T-cell (primary cell): ENCODE measurements at regions of chr19 and their contacts with region 1.

Region 1: GRCh38 chr19:4791170-4792018 is at the start of gene FEM1A:
- DNase-seq: peak; percentile 93 to 100 (median 99)
- ATAC-seq: peak; percentile 92 to 97 (median 94)
- H3K4me3 ChIP-seq: peak within 1 kb of the TSS; percentile 71 to 84
- H3K4me3 Mint-ChIP-seq: peak within 1 kb of the TSS; percentile 77 to 85 (median 77)
- H3K27ac ChIP-seq: peak within 1 kb of the TSS; percentile 70
- H3K27ac Mint-ChIP-seq: peak within 1 kb of the TSS; percentile 76 to 87
- H3K4me1 ChIP-seq: peaks cover 3 to 41% of the 10 kb centered on the region in 2 experiments
- H3K4me1 Mint-ChIP-seq: peaks cover 20 to 40% (median 39%) of the 10 kb centered on the region in 3 donors
- H3K27me3 ChIP-seq: no peaks in the 10 kb centered on the region
- H3K27me3 Mint-ChIP-seq: no peaks in the 10 kb centered on the region
- total RNA-seq, gene FEM1A: 9.7 to 17.7 (median 16.1) TPM

Region 2: DNA sequence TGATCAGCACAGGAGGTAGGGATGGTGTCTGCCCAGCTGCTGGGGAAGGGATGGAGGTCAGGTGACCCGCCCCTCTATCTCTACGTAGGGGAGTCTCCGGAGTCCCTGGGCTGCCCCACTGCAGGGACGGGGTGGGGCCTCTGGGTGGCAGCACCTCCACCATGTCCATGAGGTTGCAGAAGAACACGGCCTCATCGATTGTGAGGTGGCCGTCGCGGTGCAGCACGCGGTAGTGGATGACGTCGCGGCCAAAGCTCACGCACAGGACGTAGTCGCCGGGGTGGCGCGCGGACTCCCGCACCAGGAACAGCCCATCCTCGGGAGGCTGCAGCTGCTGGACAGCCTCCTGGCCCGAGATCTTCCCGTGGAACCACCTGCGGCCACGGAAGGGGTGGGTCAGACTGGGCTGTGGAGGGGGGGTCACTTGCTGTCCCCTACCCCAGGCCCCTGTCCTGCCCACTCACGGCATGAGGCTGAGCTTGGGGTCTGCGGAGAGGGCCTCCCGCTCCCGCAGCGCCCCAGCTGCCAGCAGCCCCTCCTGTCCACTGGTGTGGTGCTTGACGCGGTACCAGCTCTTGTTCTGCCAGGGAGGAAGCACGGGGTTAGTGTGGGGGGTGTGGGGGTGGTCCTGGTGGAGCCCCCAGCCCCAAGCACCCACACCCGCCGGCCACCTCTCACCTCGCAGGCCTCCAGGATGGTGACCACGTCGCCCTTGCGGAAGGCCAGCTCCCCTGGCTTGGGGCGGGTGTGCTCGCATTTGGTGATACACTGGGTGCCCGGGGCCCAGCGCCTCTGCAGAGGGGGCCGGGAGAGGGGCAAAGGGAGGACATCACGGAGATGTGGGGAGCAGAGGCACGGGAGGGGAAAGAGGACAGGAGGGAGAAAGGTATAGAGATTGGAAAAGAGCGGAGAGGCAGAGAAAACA is 1007.5 kb before region 1 on chr19:
- CTCF ChIA-PET with region 1: no interaction called
- POLR2A ChIA-PET with region 1: interaction called in 1 of 2 experiments, 12 read pairs
- DNase-seq: peak in 25 of 35 experiments; percentile 21 to 62 (median 44)
- ATAC-seq: peak in 1 of 4 experiments; percentile 55
- H3K4me3 ChIP-seq: no peak overlapping the region
- H3K4me3 Mint-ChIP-seq: peak overlapping the region; percentile 63 to 80 (median 79)
- H3K27ac ChIP-seq: no peak overlapping the region
- H3K27ac Mint-ChIP-seq: peak overlapping the region in 1 of 2 donors; percentile 28
- H3K4me1 ChIP-seq: peaks cover 6 to 40% of the 10 kb centered on the region in 2 experiments
- H3K4me1 Mint-ChIP-seq: peaks cover 6 to 31% (median 18%) of the 10 kb centered on the region in 3 donors
- H3K27me3 ChIP-seq: peaks cover 0 to 6% of the 10 kb centered on the region in 2 experiments
- H3K27me3 Mint-ChIP-seq: no peaks in the 10 kb centered on the region

Region 3: DNA sequence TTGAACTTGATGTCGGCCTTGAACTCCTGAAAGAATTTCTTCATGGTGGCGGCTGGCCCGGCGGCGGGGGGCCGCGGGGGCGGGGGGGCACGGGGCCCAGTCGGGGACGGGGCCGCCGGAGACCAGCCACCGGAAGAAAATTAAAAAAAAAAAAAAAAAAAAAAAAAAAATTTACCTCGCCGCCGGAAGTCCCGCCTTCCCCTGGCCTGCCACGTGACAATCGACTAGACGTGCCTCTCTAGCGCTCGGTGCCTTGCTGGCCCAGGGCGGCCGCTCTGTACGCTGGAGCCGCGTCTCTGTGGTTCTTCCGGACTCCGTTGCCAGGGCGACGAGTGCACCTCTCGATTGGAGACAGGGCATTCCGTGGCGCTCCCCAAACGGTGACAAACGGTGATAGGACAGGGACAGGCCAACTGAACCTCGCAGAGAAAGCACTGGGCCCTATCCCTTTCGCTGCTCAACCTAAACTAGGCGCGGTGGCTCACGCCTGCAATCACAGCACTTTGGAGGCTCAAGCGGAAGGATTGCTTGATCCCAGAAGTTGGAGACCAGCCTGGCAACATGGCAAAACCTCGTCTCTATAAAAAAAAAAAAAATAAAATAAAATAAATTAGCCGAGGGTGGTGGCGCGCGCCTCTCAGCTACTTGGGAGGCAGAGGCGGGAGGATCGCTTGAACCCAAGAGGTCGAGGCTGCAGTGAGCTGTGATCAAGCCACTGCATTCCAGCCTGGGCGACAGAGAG is 333.6 kb before region 1 on chr19 and contains the start of gene UBXN6:
- CTCF ChIA-PET with region 1: no interaction called
- POLR2A ChIA-PET with region 1: no interaction called
- DNase-seq: peak; percentile 94 to 99 (median 98)
- ATAC-seq: peak; percentile 93 to 95 (median 94)
- H3K4me3 ChIP-seq: peak within 1 kb of the TSS; percentile 71 to 80
- H3K4me3 Mint-ChIP-seq: peak within 1 kb of the TSS; percentile 86 to 89 (median 87)
- H3K27ac ChIP-seq: peak within 1 kb of the TSS; percentile 60
- H3K27ac Mint-ChIP-seq: peak within 1 kb of the TSS; percentile 86 to 87
- H3K4me1 ChIP-seq: peaks cover 2 to 25% of the 10 kb centered on the region in 2 experiments
- H3K4me1 Mint-ChIP-seq: peaks cover 14 to 26% (median 19%) of the 10 kb centered on the region in 3 donors
- H3K27me3 ChIP-seq: no peaks in the 10 kb centered on the region
- H3K27me3 Mint-ChIP-seq: no peaks in the 10 kb centered on the region
- total RNA-seq, gene UBXN6: 49.7 to 86.4 (median 76.5) TPM

Region 4: GRCh38 chr19:4471403-4472173 is 319.8 kb before region 1 on chr19:
- CTCF ChIA-PET with region 1: interaction called in 1 of 2 experiments, 13 read pairs
- POLR2A ChIA-PET with region 1: no interaction called
- DNase-seq: peak; percentile 86 to 100 (median 98)
- ATAC-seq: peak; percentile 84 to 86 (median 84)
- H3K4me3 ChIP-seq: peak overlapping the region; percentile 76 to 84
- H3K4me3 Mint-ChIP-seq: no peak overlapping the region
- H3K27ac ChIP-seq: peak overlapping the region; percentile 83
- H3K27ac Mint-ChIP-seq: no peak overlapping the region
- H3K4me1 ChIP-seq: peaks cover 15 to 38% of the 10 kb centered on the region in 2 experiments
- H3K4me1 Mint-ChIP-seq: peaks cover 23 to 25% (median 24%) of the 10 kb centered on the region in 3 donors
- H3K27me3 ChIP-seq: no peaks in the 10 kb centered on the region
- H3K27me3 Mint-ChIP-seq: no peaks in the 10 kb centered on the region

Region 5: DNA sequence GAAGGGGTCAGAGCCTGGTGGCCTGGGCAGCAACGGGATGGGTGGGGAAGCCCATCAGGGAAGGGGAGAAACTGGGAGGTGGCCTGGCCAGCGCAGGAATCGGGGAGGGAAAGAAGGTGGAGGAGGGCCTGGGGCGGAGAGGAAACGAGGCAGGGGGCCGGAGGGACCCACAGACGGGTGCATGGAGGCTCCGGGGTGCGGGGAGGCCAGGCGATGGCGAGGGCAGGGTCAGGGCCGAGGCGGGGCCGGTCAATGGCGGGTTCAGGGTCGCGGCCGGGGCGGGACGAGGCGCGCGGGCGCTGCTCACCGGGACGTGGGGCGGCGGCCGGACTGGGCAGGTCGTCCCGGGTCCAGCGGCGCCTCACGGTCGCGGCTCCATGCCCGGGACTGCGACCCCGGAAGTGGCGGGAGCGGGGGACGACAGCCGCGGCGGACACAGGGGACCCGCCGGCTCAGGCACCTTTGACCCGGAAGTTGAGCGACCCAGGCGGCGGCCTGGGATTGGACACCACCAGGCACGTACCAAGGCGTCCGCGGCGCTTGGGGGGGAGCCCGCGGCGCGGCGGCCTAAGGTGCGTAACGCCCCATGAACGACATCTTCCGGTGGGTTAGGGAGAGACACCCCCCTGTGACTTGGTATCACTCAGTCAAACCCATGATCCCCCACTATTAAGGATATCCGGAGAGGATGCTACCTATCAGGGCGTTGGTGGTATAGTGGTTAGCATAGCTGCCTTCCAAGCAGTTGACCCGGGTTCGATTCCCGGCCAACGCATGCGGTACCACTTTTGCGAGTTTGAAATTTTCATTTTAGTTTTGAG is 67.8 kb before region 1 on chr19 and contains the start of gene DPP9:
- CTCF ChIA-PET with region 1: interaction called in 1 of 2 experiments, 36 read pairs
- POLR2A ChIA-PET with region 1: interaction called in 1 of 2 experiments, 6 read pairs
- DNase-seq: peak; percentile 91 to 99 (median 96)
- ATAC-seq: peak; percentile 92 to 96 (median 94)
- H3K4me3 ChIP-seq: peak within 1 kb of the TSS; percentile 88 to 93
- H3K4me3 Mint-ChIP-seq: peak within 1 kb of the TSS; percentile 91 to 99 (median 92)
- H3K27ac ChIP-seq: peak within 1 kb of the TSS; percentile 81
- H3K27ac Mint-ChIP-seq: peak within 1 kb of the TSS; percentile 94 to 96
- H3K4me1 ChIP-seq: peaks cover 8 to 49% of the 10 kb centered on the region in 2 experiments
- H3K4me1 Mint-ChIP-seq: peaks cover 32 to 46% (median 36%) of the 10 kb centered on the region in 3 donors
- H3K27me3 ChIP-seq: no peaks in the 10 kb centered on the region
- H3K27me3 Mint-ChIP-seq: peaks cover 0 to 7% of the 10 kb centered on the region in 2 donors
- total RNA-seq, gene DPP9: 71.8 to 103 (median 95.3) TPM

Region 6: DNA sequence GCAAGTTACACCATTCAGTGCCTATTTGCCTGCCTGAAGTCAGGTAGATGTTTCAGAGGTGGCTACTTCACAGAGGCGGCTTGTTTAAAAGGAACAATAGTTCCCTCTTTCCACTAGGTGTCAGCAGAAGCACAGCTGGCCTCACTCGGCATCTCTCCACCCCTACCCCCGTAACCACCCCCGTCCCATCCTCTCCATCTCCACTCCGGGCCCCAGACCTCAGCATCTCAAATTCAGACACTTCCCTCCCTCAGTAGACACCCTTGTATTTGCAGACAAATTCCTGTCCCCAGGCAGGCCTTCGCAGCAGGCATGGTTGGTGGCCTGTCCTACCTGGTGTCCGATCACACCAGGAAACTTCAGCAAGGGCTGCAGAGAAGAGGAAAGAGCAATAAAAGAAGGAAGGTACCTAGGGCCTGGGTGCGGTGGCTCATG is 58.7 kb before region 1 on chr19:
- CTCF ChIA-PET with region 1: interaction called, 5 to 22 read pairs
- POLR2A ChIA-PET with region 1: interaction called in 1 of 2 experiments, 6 read pairs
- DNase-seq: peak; percentile 10 to 76 (median 38)
- ATAC-seq: peak; percentile 80 to 95 (median 92)
- H3K4me3 ChIP-seq: no peak overlapping the region
- H3K4me3 Mint-ChIP-seq: peak overlapping the region in 1 of 3 donors; percentile 6
- H3K27ac ChIP-seq: no peak overlapping the region
- H3K27ac Mint-ChIP-seq: no peak overlapping the region
- H3K4me1 ChIP-seq: peaks cover 0 to 6% of the 10 kb centered on the region in 2 experiments
- H3K4me1 Mint-ChIP-seq: peaks cover 6 to 14% (median 7%) of the 10 kb centered on the region in 3 donors
- H3K27me3 ChIP-seq: peaks cover 0 to 29% of the 10 kb centered on the region in 2 experiments
- H3K27me3 Mint-ChIP-seq: peaks cover 3 to 6% of the 10 kb centered on the region in 2 donors

Region 7: GRCh38 chr19:4911786-4912672 is 120.6 kb after region 1 on chr19:
- CTCF ChIA-PET with region 1: interaction called in 1 of 2 experiments, 12 read pairs
- POLR2A ChIA-PET with region 1: no interaction called
- DNase-seq: peak; percentile 45 to 83 (median 62)
- ATAC-seq: peak; percentile 24 to 49 (median 37)
- H3K4me3 ChIP-seq: peak overlapping the region; percentile 37 to 41
- H3K4me3 Mint-ChIP-seq: peak overlapping the region; percentile 87 to 99 (median 99)
- H3K27ac ChIP-seq: peak overlapping the region; percentile 60
- H3K27ac Mint-ChIP-seq: peak overlapping the region; percentile 92 to 99
- H3K4me1 ChIP-seq: peaks cover 25 to 84% of the 10 kb centered on the region in 2 experiments
- H3K4me1 Mint-ChIP-seq: peaks cover 59 to 69% (median 63%) of the 10 kb centered on the region in 3 donors
- H3K27me3 ChIP-seq: peaks cover 0 to 4% of the 10 kb centered on the region in 2 experiments
- H3K27me3 Mint-ChIP-seq: no peaks in the 10 kb centered on the region

Region 8: GRCh38 chr19:5031231-5032100 is 240.1 kb after region 1 on chr19:
- CTCF ChIA-PET with region 1: no interaction called
- POLR2A ChIA-PET with region 1: no interaction called
- DNase-seq: peak; percentile 41 to 86 (median 73)
- ATAC-seq: peak; percentile 88 to 91 (median 89)
- H3K4me3 ChIP-seq: no peak overlapping the region
- H3K4me3 Mint-ChIP-seq: no peak overlapping the region
- H3K27ac ChIP-seq: no peak overlapping the region
- H3K27ac Mint-ChIP-seq: no peak overlapping the region
- H3K4me1 ChIP-seq: peaks cover 0 to 11% of the 10 kb centered on the region in 2 experiments
- H3K4me1 Mint-ChIP-seq: peaks cover 9 to 20% (median 10%) of the 10 kb centered on the region in 3 donors
- H3K27me3 ChIP-seq: no peaks in the 10 kb centered on the region
- H3K27me3 Mint-ChIP-seq: no peaks in the 10 kb centered on the region